Transverse colon (tissue), 4 donors: ENCODE measurements at regions of chr17 and their contacts with region 1.

Region 1: DNA sequence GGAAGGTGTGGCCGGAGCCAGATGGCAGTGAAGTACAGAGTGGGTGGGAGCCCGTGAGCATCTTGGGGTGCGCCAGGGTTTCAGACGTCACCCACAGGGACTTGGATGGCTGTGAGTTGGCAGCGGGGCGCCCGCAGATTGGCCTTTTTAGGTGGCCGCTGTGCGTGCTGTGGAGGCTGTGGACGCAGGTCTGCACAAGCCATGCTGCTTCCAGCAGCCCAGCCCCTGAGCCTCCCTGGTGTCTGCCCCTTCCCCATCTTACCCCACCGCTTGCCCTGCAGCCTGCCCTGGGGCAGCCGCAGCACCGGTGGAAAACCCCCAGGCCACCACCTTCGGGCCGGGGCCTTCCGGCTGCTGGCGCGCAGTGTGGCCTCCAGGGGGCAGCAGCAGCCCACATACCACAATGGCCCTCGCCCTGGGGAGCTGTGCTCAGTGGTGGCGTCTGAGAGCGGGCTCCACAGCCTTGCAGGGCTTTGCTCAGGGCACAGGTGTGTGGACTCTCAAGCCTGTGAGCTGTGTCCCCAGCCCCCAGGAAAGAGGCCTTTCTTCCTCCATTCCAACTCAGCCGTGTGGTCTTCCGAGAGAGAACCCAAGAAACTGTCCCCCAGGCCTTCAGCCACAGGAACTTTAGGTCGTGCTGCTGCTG is 11.8 kb downstream of the ENDOV start:
- DNase-seq: peak; percentile 76
- H3K4me3 ChIP-seq: no peak overlapping the region
- H3K27ac ChIP-seq: no peak overlapping the region
- H3K4me1 ChIP-seq: peaks cover 0 to 7% (median 0%) of the 10 kb centered on the region in 4 donors
- H3K27me3 ChIP-seq: no peaks in the 10 kb centered on the region
- CTCF ChIP-seq: peak; percentile 94 to 98 (median 97)
- EP300 ChIP-seq: no peak
- POLR2A ChIP-seq: no peak

Region 2: GRCh38 chr17:80477647-80478478 is 51.1 kb after region 1 on chr17:
- in situ Hi-C with region 1: no loop called
- intact Hi-C with region 1: loop called (anchors 5 kb)
- DNase-seq: peak; percentile 35
- H3K4me3 ChIP-seq: peak overlapping the region in 3 of 4 donors; percentile 33 to 50 (median 37)
- H3K27ac ChIP-seq: peak overlapping the region in 1 of 4 donors; percentile 81
- H3K4me1 ChIP-seq: peaks cover 2 to 43% (median 39%) of the 10 kb centered on the region in 4 donors
- H3K27me3 ChIP-seq: peaks cover 100% of the 10 kb centered on the region
- CTCF ChIP-seq: peak in 3 of 5 experiments; percentile 29 to 42 (median 35)
- EP300 ChIP-seq: no peak
- POLR2A ChIP-seq: no peak

Region 3: DNA sequence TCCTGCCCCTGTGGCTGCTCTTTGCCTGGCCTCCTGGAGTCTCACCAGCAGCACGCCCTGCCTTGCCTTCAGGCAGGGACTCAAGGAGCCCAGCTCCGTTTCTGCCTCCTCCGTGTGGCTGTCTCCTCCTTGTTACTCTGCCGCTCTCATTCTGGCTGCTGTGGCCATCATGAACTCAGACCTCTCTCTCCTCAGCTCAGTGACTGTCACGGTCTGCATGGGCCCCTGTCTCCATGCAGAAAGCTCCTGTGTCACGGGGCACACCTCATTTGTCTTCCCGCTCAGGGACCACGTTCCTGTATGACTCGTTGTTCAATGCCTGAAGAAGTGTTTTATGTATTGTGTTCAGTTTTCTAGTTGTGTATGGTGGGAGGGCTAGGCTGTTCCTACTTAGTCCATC is 143.1 kb after region 1 on chr17:
- in situ Hi-C with region 1: loop called in 2 of 4 experiments (anchors 5 to 10 kb)
- intact Hi-C with region 1: loop called (anchors 5 kb)
- DNase-seq: no peak
- H3K4me3 ChIP-seq: no peak overlapping the region
- H3K27ac ChIP-seq: no peak overlapping the region
- H3K4me1 ChIP-seq: peaks cover 0 to 6% (median 0%) of the 10 kb centered on the region in 4 donors
- H3K27me3 ChIP-seq: no peaks in the 10 kb centered on the region
- CTCF ChIP-seq: no peak
- EP300 ChIP-seq: no peak
- POLR2A ChIP-seq: no peak

Region 4: DNA sequence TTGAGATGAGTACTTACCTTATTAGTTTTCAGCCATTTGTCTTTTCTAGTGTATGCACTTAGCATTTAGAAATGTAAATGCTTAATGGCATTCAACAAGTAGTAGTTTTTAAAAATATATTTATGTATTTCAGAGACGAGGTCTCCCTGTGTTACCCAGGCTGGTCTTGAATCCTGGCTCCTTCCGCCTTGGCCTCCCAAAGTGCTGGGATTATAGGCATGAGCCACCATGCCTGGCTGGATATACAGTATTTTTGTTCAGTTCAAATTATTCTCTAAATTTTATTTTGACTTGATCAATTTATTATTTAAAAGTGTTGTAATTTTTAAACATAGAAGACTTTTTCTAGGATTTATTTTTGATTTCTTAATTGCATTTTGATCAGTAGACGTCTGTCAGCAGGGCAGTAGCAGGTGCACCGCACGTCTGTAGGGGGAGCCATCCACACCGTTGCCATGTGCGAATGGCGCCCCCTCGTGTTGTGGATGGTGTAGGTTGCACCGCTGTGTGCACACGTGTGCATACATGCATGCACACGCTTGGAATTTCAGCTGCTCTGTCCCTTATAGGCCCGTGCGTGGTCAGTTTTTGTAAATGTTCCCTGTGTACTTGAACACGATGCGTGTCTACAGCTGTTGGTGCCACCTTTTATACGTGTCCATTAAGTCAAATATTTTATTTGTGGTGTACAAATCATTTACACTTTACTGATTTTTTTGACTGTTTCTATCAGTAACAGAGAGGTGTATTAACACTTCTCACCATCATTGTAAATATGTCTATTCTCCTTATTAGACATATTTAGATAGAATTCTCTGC is 148.5 kb after region 1 on chr17:
- in situ Hi-C with region 1: loop called in 2 of 4 experiments (anchors 5 to 10 kb)
- intact Hi-C with region 1: loop called (anchors 5 kb)
- DNase-seq: peak; percentile 91
- H3K4me3 ChIP-seq: no peak overlapping the region
- H3K27ac ChIP-seq: no peak overlapping the region
- H3K4me1 ChIP-seq: no peaks in the 10 kb centered on the region
- H3K27me3 ChIP-seq: no peaks in the 10 kb centered on the region
- CTCF ChIP-seq: peak; percentile 98 to 100 (median 99)
- EP300 ChIP-seq: no peak
- POLR2A ChIP-seq: no peak

Region 5: GRCh38 chr17:80866147-80866793 is 439.5 kb after region 1 on chr17:
- in situ Hi-C with region 1: loop called in 1 of 4 experiments (anchors 25 kb)
- intact Hi-C with region 1: no loop called
- DNase-seq: peak; percentile 71
- H3K4me3 ChIP-seq: no peak overlapping the region
- H3K27ac ChIP-seq: no peak overlapping the region
- H3K4me1 ChIP-seq: peaks cover 0 to 6% (median 2%) of the 10 kb centered on the region in 4 donors
- H3K27me3 ChIP-seq: no peaks in the 10 kb centered on the region
- CTCF ChIP-seq: peak; percentile 65 to 75 (median 72)
- EP300 ChIP-seq: no peak
- POLR2A ChIP-seq: no peak

Region 6: GRCh38 chr17:80970044-80970761 is 543.4 kb after region 1 on chr17:
- in situ Hi-C with region 1: loop called in 1 of 4 experiments (anchors 10 kb)
- intact Hi-C with region 1: no loop called
- DNase-seq: peak; percentile 50
- H3K4me3 ChIP-seq: no peak overlapping the region
- H3K27ac ChIP-seq: no peak overlapping the region
- H3K4me1 ChIP-seq: peaks cover 0 to 32% (median 14%) of the 10 kb centered on the region in 4 donors
- H3K27me3 ChIP-seq: peaks cover 31% of the 10 kb centered on the region
- CTCF ChIP-seq: peak; percentile 35 to 60 (median 46)
- EP300 ChIP-seq: no peak
- POLR2A ChIP-seq: no peak

Region 7: GRCh38 chr17:80981062-80981902 is 554.5 kb after region 1 on chr17:
- in situ Hi-C with region 1: loop called in 3 of 4 experiments (anchors 10 kb)
- intact Hi-C with region 1: loop called (anchors 2 kb)
- DNase-seq: no peak
- H3K4me3 ChIP-seq: peak overlapping the region in 2 of 4 donors; percentile 14 to 34
- H3K27ac ChIP-seq: no peak overlapping the region
- H3K4me1 ChIP-seq: peaks cover 3 to 10% (median 9%) of the 10 kb centered on the region in 4 donors
- H3K27me3 ChIP-seq: peaks cover 16% of the 10 kb centered on the region
- CTCF ChIP-seq: peak; percentile 28 to 84 (median 77)
- EP300 ChIP-seq: no peak
- POLR2A ChIP-seq: no peak

Region 8: DNA sequence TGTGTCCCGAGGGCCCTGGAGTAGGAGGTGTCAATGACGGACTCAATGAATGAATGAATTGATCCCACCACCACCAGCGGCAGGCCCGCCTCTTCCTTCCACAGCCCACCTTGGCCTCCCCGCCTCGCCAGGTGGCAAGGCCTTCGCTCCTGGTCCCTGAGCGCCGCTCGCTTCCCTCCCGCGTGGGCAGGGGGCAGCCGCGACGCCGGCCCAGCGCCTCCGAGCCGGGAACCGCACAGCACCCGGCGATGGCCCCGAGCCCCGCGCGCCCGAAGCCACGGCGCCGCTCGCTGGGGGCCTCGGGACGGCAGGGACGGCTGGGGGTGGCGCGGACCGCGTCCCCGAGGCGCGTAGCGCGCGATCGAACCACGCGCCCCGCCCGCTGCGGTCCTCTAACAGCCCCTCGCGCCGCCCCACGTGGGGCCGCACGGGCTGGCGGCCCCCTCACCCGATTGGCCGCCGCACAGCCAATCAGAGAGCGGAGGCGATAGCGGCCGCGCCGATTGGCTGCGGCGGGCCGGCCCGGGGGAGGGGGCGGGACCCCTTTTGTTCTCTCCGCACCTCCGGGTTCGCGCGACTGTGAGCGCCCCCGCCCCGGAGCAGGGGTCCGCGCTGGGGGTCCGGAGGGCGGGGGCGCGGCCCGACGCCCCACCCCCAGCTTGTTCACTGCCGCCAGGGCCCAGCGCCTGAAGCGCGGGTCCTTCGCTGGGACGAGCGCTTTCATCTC is 1054.4 kb after region 1 on chr17:
- in situ Hi-C with region 1: no loop called
- intact Hi-C with region 1: no loop called
- DNase-seq: peak; percentile 57
- H3K4me3 ChIP-seq: peak overlapping the region; percentile 32 to 53 (median 38)
- H3K27ac ChIP-seq: no peak overlapping the region
- H3K4me1 ChIP-seq: peaks cover 14 to 28% (median 25%) of the 10 kb centered on the region in 4 donors
- H3K27me3 ChIP-seq: peaks cover 29% of the 10 kb centered on the region
- CTCF ChIP-seq: no peak
- EP300 ChIP-seq: no peak
- POLR2A ChIP-seq: no peak